ENCODE measurements at regions of chr20 and their contacts with region 1.

Region 1: GRCh38 chr20:53828682-53829254 is 235.1 kb upstream of the ZNF217 start:
- DNase-seq: no peak
- ATAC-seq: no peak
- H3K4me3 Mint-ChIP-seq: peak overlapping the region; percentile 81
- H3K27ac Mint-ChIP-seq: peak overlapping the region; percentile 96
- H3K4me1 Mint-ChIP-seq: peaks cover 66% of the 10 kb centered on the region
- H3K27me3 Mint-ChIP-seq: no peaks in the 10 kb centered on the region
- CTCF ChIP-seq: no peak

Region 2: DNA sequence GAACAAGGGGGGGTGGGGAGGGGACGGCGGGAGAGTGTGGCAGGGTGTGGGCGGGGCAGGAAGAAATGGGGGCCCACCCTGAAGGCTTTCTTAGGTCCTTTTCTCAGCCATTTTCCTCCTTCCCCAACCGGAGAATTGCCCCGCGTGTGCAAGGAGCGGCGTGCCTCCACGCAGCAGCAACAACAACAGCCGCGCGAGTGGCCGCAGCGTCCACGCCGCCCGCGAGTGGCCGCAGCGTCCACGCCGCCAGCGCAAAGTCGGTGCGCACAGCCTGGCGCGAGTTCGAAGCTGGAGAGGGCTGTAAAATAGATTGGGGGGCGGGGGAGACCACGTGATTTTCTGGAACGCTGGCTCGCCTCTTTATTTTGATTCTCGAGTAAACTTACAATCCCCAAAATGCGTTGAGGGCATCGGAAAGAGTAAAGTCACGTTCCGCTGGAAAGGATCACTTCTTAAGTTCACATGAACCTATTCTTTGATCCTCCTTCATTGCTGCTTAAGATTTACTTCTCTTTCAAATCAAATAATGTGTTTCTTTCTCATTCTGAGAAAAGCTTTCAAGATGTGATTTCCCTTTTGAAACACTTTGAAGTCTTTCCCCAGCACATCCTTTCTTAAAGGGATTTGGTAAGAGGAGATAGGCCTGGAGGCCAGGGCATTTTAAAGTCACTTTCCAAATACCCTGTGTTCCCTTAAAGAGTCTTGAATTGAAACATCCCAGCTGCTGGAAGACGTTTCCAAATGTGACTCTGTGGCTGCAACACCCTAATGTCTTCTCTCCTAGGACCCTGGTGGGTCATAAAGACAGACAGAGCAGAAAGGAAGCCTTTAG is 168.5 kb before region 1 on chr20:
- CTCF ChIA-PET with region 1: no interaction called
- POLR2A ChIA-PET with region 1: no interaction called
- intact Hi-C with region 1: loop called (anchors 5 kb)
- DNase-seq: no peak
- ATAC-seq: peak; percentile 31
- H3K4me3 Mint-ChIP-seq: peak overlapping the region; percentile 87
- H3K27ac Mint-ChIP-seq: peak overlapping the region; percentile 90
- H3K4me1 Mint-ChIP-seq: peaks cover 66% of the 10 kb centered on the region
- H3K27me3 Mint-ChIP-seq: no peaks in the 10 kb centered on the region
- CTCF ChIP-seq: no peak

Region 3: DNA sequence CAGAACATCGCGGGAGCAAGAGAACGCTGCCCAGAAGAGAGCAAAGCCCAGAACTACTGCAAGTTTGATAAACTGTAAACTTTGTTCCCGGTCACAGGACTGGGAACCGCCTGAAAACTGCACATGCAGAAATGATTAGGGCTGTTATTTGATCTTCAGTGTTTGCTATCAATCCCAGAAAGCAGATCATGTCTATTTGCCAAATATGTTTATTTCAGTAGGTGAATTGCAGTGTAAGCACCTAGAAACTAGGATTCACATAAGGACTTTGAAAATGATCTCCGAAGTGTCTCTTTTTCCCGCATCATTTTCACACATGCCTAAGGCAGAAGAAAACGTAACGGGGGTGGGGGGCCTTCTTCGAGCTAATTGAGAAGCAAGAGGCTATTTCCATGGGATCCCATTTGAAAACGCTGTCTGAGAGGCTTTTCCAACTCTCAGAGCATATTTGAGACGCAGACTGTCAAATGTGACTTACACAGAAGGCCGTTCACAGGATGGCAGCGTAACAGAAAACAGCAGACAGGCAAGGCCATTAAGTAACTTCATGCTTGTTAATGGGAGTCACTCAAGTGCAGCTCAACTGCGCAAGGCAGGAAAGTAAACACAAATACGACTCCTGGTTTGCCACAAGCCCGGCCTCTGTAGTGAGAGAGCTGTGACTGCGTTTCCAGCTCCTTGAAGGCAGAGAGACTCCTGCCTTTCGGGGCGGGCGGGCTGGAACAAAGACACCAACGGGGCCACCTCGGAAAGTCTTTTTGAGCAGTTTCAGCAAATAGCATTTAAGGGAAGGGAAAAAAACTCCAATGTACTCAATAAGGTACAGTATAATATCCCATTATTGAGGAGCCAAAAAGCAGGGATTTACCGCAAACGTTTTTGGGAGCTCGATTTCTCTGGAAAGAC is 90.5 kb before region 1 on chr20:
- CTCF ChIA-PET with region 1: no interaction called
- POLR2A ChIA-PET with region 1: interaction called, 8 read pairs
- intact Hi-C with region 1: loop called (anchors 5 kb)
- DNase-seq: no peak
- ATAC-seq: no peak
- H3K4me3 Mint-ChIP-seq: peak overlapping the region; percentile 74
- H3K27ac Mint-ChIP-seq: peak overlapping the region; percentile 97
- H3K4me1 Mint-ChIP-seq: peaks cover 78% of the 10 kb centered on the region
- H3K27me3 Mint-ChIP-seq: no peaks in the 10 kb centered on the region
- CTCF ChIP-seq: no peak

Region 4: DNA sequence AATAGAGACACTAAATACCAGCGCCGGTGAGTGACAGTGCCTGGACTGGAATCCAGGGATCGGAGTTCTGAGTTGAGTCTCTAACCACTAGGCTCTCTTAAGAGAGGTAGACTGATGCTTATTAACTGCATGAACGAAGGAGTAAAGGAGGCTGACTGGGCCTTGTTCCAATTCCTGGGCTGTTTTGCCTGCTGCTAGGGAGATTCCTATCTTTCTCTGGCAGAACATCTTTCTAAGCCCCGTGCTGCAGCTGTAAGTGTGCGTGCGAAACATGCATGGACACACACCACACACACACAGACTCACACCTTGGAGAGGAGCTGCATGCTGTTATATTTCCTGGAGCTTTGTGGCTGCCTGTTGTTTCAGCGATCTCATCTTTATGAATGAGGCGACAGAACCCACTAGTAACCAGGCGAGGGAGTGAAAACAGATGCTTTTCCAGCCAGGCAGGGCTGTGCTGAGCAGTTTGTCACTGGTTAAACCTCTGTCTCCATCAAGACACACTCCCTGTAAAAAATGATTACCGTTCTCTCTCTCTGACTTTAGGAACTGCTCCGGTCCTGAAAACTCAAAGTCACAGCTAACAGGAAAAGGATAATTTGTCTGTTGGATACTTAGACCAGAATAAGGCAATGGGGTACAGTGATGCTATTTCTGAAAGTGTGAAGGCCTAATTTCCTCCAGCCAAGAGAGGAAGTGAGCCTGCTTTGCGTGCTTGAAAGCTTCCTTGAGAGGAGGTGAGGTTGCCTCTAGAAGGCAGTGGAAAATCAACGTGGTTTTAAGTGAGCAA is 77.7 kb before region 1 on chr20:
- CTCF ChIA-PET with region 1: no interaction called
- POLR2A ChIA-PET with region 1: interaction called, 4 read pairs
- intact Hi-C with region 1: loop called (anchors 1 kb)
- DNase-seq: no peak
- ATAC-seq: peak; percentile 87
- H3K4me3 Mint-ChIP-seq: peak overlapping the region; percentile 45
- H3K27ac Mint-ChIP-seq: peak overlapping the region; percentile 95
- H3K4me1 Mint-ChIP-seq: peaks cover 64% of the 10 kb centered on the region
- H3K27me3 Mint-ChIP-seq: no peaks in the 10 kb centered on the region
- CTCF ChIP-seq: no peak

Region 5: DNA sequence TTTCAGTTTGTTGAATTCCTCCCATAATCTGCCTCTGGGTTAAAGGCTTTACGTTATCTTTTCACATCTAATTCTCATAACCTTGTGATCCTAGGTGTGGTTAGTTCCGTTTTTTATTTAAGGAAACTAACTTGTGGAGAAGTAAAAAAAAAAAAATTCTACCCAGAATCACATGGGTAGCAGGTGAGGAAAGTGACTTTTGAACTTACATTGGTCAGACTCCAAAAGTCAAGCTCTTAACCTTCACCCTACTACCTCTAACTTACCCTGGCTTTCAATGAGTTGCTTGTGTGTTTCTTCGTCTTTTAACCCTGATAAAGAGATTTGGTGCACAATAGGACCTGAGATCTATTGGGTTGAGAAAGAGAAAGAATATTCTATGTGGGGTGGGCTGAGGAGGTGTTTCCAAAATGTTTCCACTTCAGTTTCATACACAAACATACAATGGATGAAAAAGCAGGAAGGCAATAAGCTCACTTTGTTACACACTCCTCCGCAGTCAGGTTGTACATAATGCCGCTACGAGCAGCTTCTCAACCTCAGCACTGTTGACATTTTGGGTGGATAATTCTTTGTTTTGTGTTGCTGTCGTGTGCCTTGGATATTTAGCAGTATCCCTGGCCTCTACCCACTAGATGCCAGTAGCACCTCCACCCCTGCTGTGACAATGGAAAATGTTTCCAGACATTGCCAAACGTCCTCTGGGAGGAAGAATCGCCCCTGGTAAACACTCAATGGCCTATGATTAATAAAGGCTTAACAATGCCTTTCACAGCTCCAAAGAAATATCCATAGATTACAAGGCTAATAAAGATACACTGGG is 42.1 kb before region 1 on chr20:
- CTCF ChIA-PET with region 1: no interaction called
- POLR2A ChIA-PET with region 1: interaction called, 3 read pairs
- intact Hi-C with region 1: loop called (anchors 5 kb)
- DNase-seq: no peak
- ATAC-seq: no peak
- H3K4me3 Mint-ChIP-seq: peak overlapping the region; percentile 5
- H3K27ac Mint-ChIP-seq: peak overlapping the region; percentile 70
- H3K4me1 Mint-ChIP-seq: peaks cover 28% of the 10 kb centered on the region
- H3K27me3 Mint-ChIP-seq: no peaks in the 10 kb centered on the region
- CTCF ChIP-seq: no peak

Region 6: GRCh38 chr20:53847129-53847836 is 18.5 kb after region 1 on chr20:
- CTCF ChIA-PET with region 1: interaction called, 3 read pairs
- POLR2A ChIA-PET with region 1: interaction called, 6 read pairs
- intact Hi-C with region 1: loop called (anchors 2 kb)
- DNase-seq: no peak
- ATAC-seq: peak; percentile 79
- H3K4me3 Mint-ChIP-seq: peak overlapping the region; percentile 79
- H3K27ac Mint-ChIP-seq: peak overlapping the region; percentile 88
- H3K4me1 Mint-ChIP-seq: peaks cover 59% of the 10 kb centered on the region
- H3K27me3 Mint-ChIP-seq: no peaks in the 10 kb centered on the region
- CTCF ChIP-seq: no peak

Measured in activated B cell treated with CpG ODN at 0.5 μM for 24 hours (primary cell).